GM12878 (cell line): ENCODE measurements at regions of chr14 and their contacts with region 1.

Region 1: DNA sequence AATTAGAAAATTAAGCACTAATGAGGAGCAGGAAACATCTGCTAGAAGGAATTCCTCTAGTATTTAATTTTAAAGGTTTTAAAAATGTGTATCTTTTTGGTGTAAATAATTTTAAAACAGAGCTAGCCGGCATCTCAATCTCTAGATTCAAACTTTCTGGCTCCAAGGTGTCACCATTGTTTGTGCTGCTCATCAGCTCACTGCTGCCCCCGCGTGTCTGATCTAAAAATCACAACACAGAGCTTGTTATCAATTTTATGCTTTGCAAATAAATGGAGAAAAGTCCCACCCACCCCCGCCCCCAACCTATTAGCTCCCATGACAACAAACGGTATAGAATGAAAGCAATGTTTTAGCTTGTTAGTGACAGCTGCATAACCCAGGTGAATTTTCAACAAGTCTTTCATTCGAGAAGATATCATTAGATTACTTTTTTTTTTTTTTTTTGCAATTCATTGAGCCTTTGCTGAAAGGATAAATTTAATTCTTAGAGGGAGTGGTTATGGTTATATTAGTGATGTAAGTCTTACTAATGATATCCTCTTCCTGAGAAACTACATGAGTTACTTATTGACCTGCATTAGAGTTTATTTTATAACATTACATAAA is 11.3 kb upstream of the ABHD12B start:
- DNase-seq: peak; percentile 50
- ATAC-seq: peak; percentile 83
- H3K4me3 ChIP-seq: peak overlapping the region; percentile 77
- H3K27ac ChIP-seq: peak overlapping the region; percentile 60
- H3K4me1 ChIP-seq: peaks cover 9% of the 10 kb centered on the region
- H3K27me3 ChIP-seq: no peaks in the 10 kb centered on the region; a peak in 1 of 4 replicates
- CTCF ChIP-seq: peak; percentile 61 to 79 (median 71)
- EP300 ChIP-seq: no peak
- POLR2A ChIP-seq: no peak
- RAD21 ChIP-seq: peak; percentile 94

Region 2: GRCh38 chr14:50599700-50600444 is 260.7 kb before region 1 on chr14:
- CTCF ChIA-PET with region 1: interaction called, 71 read pairs
- POLR2A ChIA-PET with region 1: interaction called, 5 read pairs
- RAD21 ChIA-PET with region 1: interaction called, 62 read pairs
- SMC1A ChIA-PET with region 1: interaction called, 41 read pairs
- in situ Hi-C with region 1: loop called (anchors 25 kb)
- intact Hi-C with region 1: loop called (anchors 2 kb)
- DNase-seq: no peak
- ATAC-seq: peak; percentile 76
- H3K4me3 ChIP-seq: no peak overlapping the region
- H3K27ac ChIP-seq: no peak overlapping the region
- H3K4me1 ChIP-seq: no peaks in the 10 kb centered on the region
- H3K27me3 ChIP-seq: no peaks in the 10 kb centered on the region
- CTCF ChIP-seq: peak; percentile 49 to 67 (median 55); a peak in 5 of 6 replicates
- EP300 ChIP-seq: no peak
- POLR2A ChIP-seq: no peak
- RAD21 ChIP-seq: peak; percentile 79

Region 3: GRCh38 chr14:50714450-50715073 is 146.0 kb before region 1 on chr14:
- CTCF ChIA-PET with region 1: interaction called, 16 read pairs
- POLR2A ChIA-PET with region 1: no interaction called
- RAD21 ChIA-PET with region 1: interaction called, 12 read pairs
- SMC1A ChIA-PET with region 1: interaction called, 16 read pairs
- in situ Hi-C with region 1: no loop called
- intact Hi-C with region 1: no loop called
- DNase-seq: no peak
- ATAC-seq: peak; percentile 85
- H3K4me3 ChIP-seq: no peak overlapping the region
- H3K27ac ChIP-seq: no peak overlapping the region
- H3K4me1 ChIP-seq: no peaks in the 10 kb centered on the region
- H3K27me3 ChIP-seq: no peaks in the 10 kb centered on the region
- CTCF ChIP-seq: peak; percentile 50 to 54 (median 52); a peak in 5 of 6 replicates
- EP300 ChIP-seq: no peak
- POLR2A ChIP-seq: no peak
- RAD21 ChIP-seq: peak; percentile 64

Region 4: DNA sequence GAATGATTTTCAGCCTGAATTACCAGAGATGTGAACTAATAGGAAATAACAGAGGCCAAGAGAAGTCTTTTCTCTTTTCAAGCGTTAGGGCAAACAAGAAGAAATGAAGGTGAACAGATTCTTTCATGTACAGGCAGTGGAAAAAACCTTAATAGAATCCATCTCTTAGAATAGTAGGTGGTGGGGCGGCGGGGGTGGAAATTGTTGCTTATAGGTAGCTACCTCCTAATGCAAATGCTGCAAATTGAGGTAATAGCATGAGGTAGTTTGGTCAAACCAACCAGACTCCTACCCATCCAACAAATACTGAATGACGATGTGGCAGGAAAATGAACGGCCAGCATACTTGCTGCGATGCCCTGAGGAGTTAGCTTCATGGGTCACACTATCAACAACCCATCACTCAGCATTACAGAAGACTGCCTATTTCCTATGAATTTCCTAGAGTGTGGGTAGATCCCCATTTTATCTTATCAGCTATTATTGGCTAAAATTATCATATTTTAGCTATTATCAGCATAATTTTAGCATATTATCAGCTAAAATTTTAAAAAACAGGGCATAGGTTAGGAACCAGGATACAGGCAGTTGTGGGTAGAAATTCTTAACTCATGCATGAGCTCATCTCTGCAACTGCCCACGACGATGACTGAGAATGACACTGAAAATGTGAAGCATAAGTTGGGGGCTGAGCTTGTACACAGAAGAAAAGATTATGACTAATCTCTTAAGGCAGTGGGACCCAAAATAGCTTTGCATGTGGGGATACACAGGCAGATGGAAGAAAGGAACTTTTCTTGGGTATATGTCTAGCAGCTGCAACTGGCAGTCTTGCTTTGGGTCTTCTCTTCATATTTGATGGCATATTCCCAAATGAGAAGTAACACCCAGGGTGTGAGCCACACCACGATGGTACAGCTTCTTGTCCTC is 98.3 kb before region 1 on chr14:
- CTCF ChIA-PET with region 1: interaction called, 19 read pairs
- POLR2A ChIA-PET with region 1: no interaction called
- RAD21 ChIA-PET with region 1: interaction called, 12 read pairs
- SMC1A ChIA-PET with region 1: interaction called, 19 read pairs
- in situ Hi-C with region 1: no loop called
- intact Hi-C with region 1: no loop called
- DNase-seq: no peak
- ATAC-seq: peak; percentile 88
- H3K4me3 ChIP-seq: no peak overlapping the region
- H3K27ac ChIP-seq: peak overlapping the region; percentile 65
- H3K4me1 ChIP-seq: peaks cover 15% of the 10 kb centered on the region; the same call in 1 of the 2 replicates
- H3K27me3 ChIP-seq: no peaks in the 10 kb centered on the region
- CTCF ChIP-seq: no peak
- EP300 ChIP-seq: peak; percentile 12 to 22; a peak in 1 of 4 replicates
- POLR2A ChIP-seq: no peak
- RAD21 ChIP-seq: no peak

Region 5: GRCh38 chr14:50792051-50792477 is 68.5 kb before region 1 on chr14:
- CTCF ChIA-PET with region 1: interaction called, 237 read pairs
- POLR2A ChIA-PET with region 1: interaction called, 9 read pairs
- RAD21 ChIA-PET with region 1: interaction called, 113 read pairs
- SMC1A ChIA-PET with region 1: interaction called, 233 read pairs
- in situ Hi-C with region 1: loop called (anchors 5 kb)
- intact Hi-C with region 1: loop called (anchors 2 kb)
- DNase-seq: no peak
- ATAC-seq: peak; percentile 37
- H3K4me3 ChIP-seq: peak overlapping the region; percentile 65
- H3K27ac ChIP-seq: peak overlapping the region; percentile 97
- H3K4me1 ChIP-seq: peaks cover 95% of the 10 kb centered on the region
- H3K27me3 ChIP-seq: no peaks in the 10 kb centered on the region
- CTCF ChIP-seq: no peak
- EP300 ChIP-seq: no peak
- POLR2A ChIP-seq: peak; percentile 33; the same call in 1 of the 2 replicates
- RAD21 ChIP-seq: no peak

Region 6: GRCh38 chr14:50839048-50839447 is 21.5 kb before region 1 on chr14:
- CTCF ChIA-PET with region 1: interaction called, 34 read pairs
- POLR2A ChIA-PET with region 1: interaction called, 7 read pairs
- RAD21 ChIA-PET with region 1: interaction called, 19 read pairs
- SMC1A ChIA-PET with region 1: interaction called, 48 read pairs
- in situ Hi-C with region 1: no loop called
- intact Hi-C with region 1: loop called (anchors 1 kb)
- DNase-seq: no peak
- ATAC-seq: peak; percentile 66
- H3K4me3 ChIP-seq: no peak overlapping the region
- H3K27ac ChIP-seq: no peak overlapping the region
- H3K4me1 ChIP-seq: peaks cover 20% of the 10 kb centered on the region
- H3K27me3 ChIP-seq: no peaks in the 10 kb centered on the region
- CTCF ChIP-seq: no peak
- EP300 ChIP-seq: no peak
- POLR2A ChIP-seq: no peak
- RAD21 ChIP-seq: no peak

Region 7: GRCh38 chr14:50892255-50892654 is 31.7 kb after region 1 on chr14:
- CTCF ChIA-PET with region 1: no interaction called
- POLR2A ChIA-PET with region 1: no interaction called
- RAD21 ChIA-PET with region 1: no interaction called
- SMC1A ChIA-PET with region 1: no interaction called
- in situ Hi-C with region 1: no loop called
- intact Hi-C with region 1: no loop called
- DNase-seq: no peak
- ATAC-seq: no peak
- H3K4me3 ChIP-seq: no peak overlapping the region
- H3K27ac ChIP-seq: no peak overlapping the region
- H3K4me1 ChIP-seq: no peaks in the 10 kb centered on the region
- H3K27me3 ChIP-seq: no peaks in the 10 kb centered on the region
- CTCF ChIP-seq: no peak
- EP300 ChIP-seq: no peak
- POLR2A ChIP-seq: no peak
- RAD21 ChIP-seq: no peak